Caco-2 (cell line): ENCODE measurements at regions of chr12 and their contacts with region 1.

Region 1: DNA sequence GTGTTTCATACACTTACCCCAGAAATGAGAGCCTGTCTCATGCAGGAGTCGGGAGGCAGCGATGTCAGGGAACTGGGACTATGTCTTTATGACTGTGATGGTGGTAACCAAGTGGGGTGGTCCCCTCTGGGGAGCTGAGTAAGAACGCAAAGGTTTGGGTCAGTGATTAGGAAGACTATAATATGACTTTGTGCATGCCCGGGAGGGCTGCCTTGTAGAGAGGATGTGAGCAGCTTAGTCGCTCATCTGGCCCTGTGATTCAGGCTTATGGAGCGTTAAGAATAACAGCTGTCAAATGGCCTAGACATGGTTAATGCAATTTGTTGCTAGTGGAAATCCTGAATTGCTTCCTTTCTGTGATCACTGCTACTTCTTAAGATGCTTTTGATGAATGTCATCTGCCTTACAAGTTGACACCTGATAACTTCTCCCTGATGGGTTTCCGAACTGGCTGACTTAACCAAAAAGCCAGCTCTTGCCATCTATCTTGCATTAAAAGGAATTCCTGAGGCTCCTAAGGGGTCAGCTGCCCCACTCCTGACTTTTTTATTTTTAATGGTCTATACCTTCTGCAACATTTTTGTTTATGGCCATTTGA is 35.4 kb upstream of the AACS start:
- DNase-seq: no peak
- H3K4me3 ChIP-seq: no peak overlapping the region
- H3K4me3 Mint-ChIP-seq: no peak overlapping the region
- H3K27ac Mint-ChIP-seq: no peak overlapping the region
- H3K4me1 ChIP-seq: no peaks in the 10 kb centered on the region
- H3K4me1 Mint-ChIP-seq: no peaks in the 10 kb centered on the region
- H3K27me3 ChIP-seq: no peaks in the 10 kb centered on the region
- H3K27me3 Mint-ChIP-seq: no peaks in the 10 kb centered on the region
- CTCF ChIP-seq: no peak

Region 2: GRCh38 chr12:124992874-124993625 is 36.8 kb before region 1 on chr12:
- CTCF ChIA-PET with region 1: no interaction called
- POLR2A ChIA-PET with region 1: no interaction called
- intact Hi-C with region 1: loop called (anchors 2 kb)
- DNase-seq: peak; percentile 89 to 92
- H3K4me3 ChIP-seq: peak overlapping the region; percentile 60
- H3K4me3 Mint-ChIP-seq: peak overlapping the region; percentile 84
- H3K27ac Mint-ChIP-seq: peak overlapping the region; percentile 46
- H3K4me1 ChIP-seq: no peaks in the 10 kb centered on the region
- H3K4me1 Mint-ChIP-seq: peaks cover 18% of the 10 kb centered on the region
- H3K27me3 ChIP-seq: no peaks in the 10 kb centered on the region
- H3K27me3 Mint-ChIP-seq: no peaks in the 10 kb centered on the region
- CTCF ChIP-seq: peak; percentile 55 to 83

Region 3: GRCh38 chr12:126998747-126999285 is 1969.0 kb after region 1 on chr12:
- CTCF ChIA-PET with region 1: no interaction called
- POLR2A ChIA-PET with region 1: no interaction called
- intact Hi-C with region 1: no loop called
- DNase-seq: no peak
- H3K4me3 ChIP-seq: no peak overlapping the region
- H3K4me3 Mint-ChIP-seq: no peak overlapping the region
- H3K27ac Mint-ChIP-seq: no peak overlapping the region
- H3K4me1 ChIP-seq: no peaks in the 10 kb centered on the region
- H3K4me1 Mint-ChIP-seq: no peaks in the 10 kb centered on the region
- H3K27me3 ChIP-seq: no peaks in the 10 kb centered on the region
- H3K27me3 Mint-ChIP-seq: no peaks in the 10 kb centered on the region
- CTCF ChIP-seq: no peak